Activated CD4-positive, alpha-beta T cell treated with anti-CD3 and anti-CD28 coated beads for 36 hours (primary cell): ENCODE measurements at regions of chr17 and their contacts with region 1.

Region 1: GRCh38 chr17:62065598-62066468 is 755 bp upstream of the MED13 start:
- DNase-seq: peak; percentile 99
- ATAC-seq: peak; percentile 94
- H3K4me3 Mint-ChIP-seq: peak overlapping the region; percentile 98
- H3K27ac Mint-ChIP-seq: peak overlapping the region; percentile 98
- H3K4me1 Mint-ChIP-seq: peaks cover 28% of the 10 kb centered on the region
- H3K27me3 Mint-ChIP-seq: no peaks in the 10 kb centered on the region

Region 2: DNA sequence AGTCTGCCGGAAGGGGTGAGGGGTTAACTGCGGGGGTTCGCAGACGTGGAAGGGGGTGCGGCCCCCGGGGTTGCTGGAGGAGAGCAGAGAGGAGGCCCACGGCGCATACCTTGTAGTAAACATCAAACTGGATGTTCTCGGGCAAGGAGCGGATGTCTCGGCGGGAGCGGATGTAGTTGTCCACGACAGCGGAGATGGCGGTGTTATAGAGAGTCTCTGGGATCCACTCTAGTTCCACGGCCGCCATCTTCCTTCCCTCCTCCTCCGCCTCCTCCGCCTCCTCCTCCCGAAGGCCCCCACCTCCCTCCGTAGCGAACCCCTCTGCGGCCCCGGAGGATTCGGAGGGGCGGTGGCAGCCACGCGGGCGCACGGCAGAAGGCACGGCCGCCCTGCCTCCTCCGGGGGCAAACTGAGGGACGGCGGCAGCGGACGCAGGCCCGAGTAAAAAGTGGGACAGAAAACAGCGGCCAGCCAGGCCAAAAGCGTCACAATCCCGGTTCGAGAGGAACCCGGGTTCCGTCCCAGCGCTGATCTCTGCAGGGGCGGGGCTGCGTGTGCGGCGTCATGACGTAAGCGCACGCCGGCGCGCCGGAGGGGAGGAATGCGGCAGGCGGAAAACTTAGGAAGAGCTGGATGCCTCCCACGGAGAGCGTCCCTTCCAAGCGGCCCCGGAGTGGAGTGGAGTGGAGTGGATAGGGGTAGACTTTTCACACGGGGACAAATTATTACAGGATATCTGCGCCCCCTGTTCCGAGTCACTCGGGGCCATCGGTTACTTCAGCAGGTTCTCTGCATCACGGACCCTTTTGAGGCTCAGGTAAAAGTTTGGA is 1539.9 kb before region 1 on chr17 and contains the start of gene APPBP2:
- CTCF ChIA-PET with region 1: no interaction called
- POLR2A ChIA-PET with region 1: no interaction called
- intact Hi-C with region 1: loop called in 1 of 2 experiments (anchors 10 kb)
- DNase-seq: peak; percentile 80
- ATAC-seq: peak; percentile 82
- H3K4me3 Mint-ChIP-seq: peak within 1 kb of the TSS; percentile 96
- H3K27ac Mint-ChIP-seq: peak within 1 kb of the TSS; percentile 97
- H3K4me1 Mint-ChIP-seq: peaks cover 30% of the 10 kb centered on the region
- H3K27me3 Mint-ChIP-seq: no peaks in the 10 kb centered on the region
- total RNA-seq, gene APPBP2: 21.4 to 28.8 TPM

Region 3: GRCh38 chr17:61635913-61636432 is 429.9 kb before region 1 on chr17:
- CTCF ChIA-PET with region 1: interaction called, 5 read pairs
- POLR2A ChIA-PET with region 1: no interaction called
- intact Hi-C with region 1: loop called (anchors 1 to 10 kb)
- DNase-seq: peak; percentile 72
- ATAC-seq: no peak
- H3K4me3 Mint-ChIP-seq: no peak overlapping the region
- H3K27ac Mint-ChIP-seq: no peak overlapping the region
- H3K4me1 Mint-ChIP-seq: no peaks in the 10 kb centered on the region
- H3K27me3 Mint-ChIP-seq: peaks cover 43% of the 10 kb centered on the region

Region 4: GRCh38 chr17:61904094-61904710 is 161.6 kb before region 1 on chr17:
- CTCF ChIA-PET with region 1: no interaction called
- POLR2A ChIA-PET with region 1: no interaction called
- intact Hi-C with region 1: no loop called
- DNase-seq: peak; percentile 44
- ATAC-seq: peak; percentile 85
- H3K4me3 Mint-ChIP-seq: no peak overlapping the region
- H3K27ac Mint-ChIP-seq: no peak overlapping the region
- H3K4me1 Mint-ChIP-seq: no peaks in the 10 kb centered on the region
- H3K27me3 Mint-ChIP-seq: no peaks in the 10 kb centered on the region

Region 5: DNA sequence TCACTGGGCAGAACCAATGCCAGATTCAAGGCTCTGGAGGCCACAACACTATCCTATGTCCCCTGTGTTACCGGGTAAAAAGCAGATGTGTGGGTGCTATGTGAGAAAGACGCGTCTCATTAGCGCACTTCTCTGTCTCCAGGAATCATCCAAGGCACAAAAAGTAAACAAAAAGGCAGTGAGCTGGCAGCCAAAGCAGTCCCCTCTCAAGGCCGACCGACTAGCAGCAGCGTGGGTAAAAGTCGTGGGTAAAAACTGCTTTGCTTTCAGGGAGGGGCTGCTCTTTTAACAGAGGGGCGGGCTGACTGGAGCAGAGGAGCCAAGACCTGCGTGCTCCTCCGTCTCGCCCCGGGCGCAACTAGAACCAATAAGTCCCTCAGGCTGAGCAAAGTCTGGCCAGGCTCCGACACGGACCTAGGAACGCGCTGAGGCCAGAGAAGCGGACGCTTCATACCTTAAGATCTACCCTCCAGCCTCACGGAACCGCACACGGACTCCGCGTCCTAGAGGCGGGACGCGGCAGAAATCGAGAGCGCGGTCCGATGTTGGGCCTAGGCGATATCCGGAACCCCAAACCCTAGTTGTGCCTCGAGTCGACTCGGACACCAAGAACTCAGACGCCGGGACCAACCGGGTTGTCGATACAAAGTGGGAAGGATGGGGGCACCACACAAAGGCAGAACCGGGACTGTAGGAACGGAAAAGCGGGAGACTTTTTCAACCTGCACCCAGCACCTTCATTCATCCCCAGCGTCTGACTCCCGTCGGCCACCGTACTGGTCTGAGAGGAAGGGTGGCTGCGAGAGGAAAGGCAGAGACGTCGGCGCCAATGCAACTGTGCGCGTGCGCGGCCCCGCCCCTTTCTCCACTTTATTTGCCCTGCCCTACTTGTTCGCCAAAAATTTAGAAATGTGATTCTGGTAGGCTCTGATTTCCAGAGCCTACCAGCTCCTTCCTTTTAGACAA is 138.3 kb before region 1 on chr17 and contains the start of gene INTS2:
- CTCF ChIA-PET with region 1: no interaction called
- POLR2A ChIA-PET with region 1: no interaction called
- intact Hi-C with region 1: loop called (anchors 1 to 2 kb)
- DNase-seq: peak; percentile 97
- ATAC-seq: peak; percentile 92
- H3K4me3 Mint-ChIP-seq: peak within 1 kb of the TSS; percentile 88
- H3K27ac Mint-ChIP-seq: peak within 1 kb of the TSS; percentile 94
- H3K4me1 Mint-ChIP-seq: peaks cover 17% of the 10 kb centered on the region
- H3K27me3 Mint-ChIP-seq: no peaks in the 10 kb centered on the region
- total RNA-seq, gene INTS2: 23.4 to 27.9 TPM

Region 6: GRCh38 chr17:62052757-62053338 is 13.0 kb before region 1 on chr17:
- CTCF ChIA-PET with region 1: interaction called, 11 read pairs
- POLR2A ChIA-PET with region 1: interaction called, 7 read pairs
- intact Hi-C with region 1: no loop called
- DNase-seq: no peak
- ATAC-seq: no peak
- H3K4me3 Mint-ChIP-seq: no peak overlapping the region
- H3K27ac Mint-ChIP-seq: no peak overlapping the region
- H3K4me1 Mint-ChIP-seq: peaks cover 46% of the 10 kb centered on the region
- H3K27me3 Mint-ChIP-seq: no peaks in the 10 kb centered on the region

Region 7: GRCh38 chr17:62109378-62109902 is 43.6 kb after region 1 on chr17:
- CTCF ChIA-PET with region 1: interaction called, 9 read pairs
- POLR2A ChIA-PET with region 1: no interaction called
- intact Hi-C with region 1: loop called in 1 of 2 experiments (anchors 2 kb)
- DNase-seq: peak; percentile 84
- ATAC-seq: peak; percentile 100
- H3K4me3 Mint-ChIP-seq: no peak overlapping the region
- H3K27ac Mint-ChIP-seq: no peak overlapping the region
- H3K4me1 Mint-ChIP-seq: no peaks in the 10 kb centered on the region
- H3K27me3 Mint-ChIP-seq: no peaks in the 10 kb centered on the region